ENCODE measurements at regions of chr3 and their contacts with region 1.

Region 1: GRCh38 chr3:28916713-28917499 is 364.0 kb upstream of the RBMS3 start:
- DNase-seq: peak in 4 of 9 donors; percentile 0 to 23 (median 7)
- ATAC-seq: no peak
- H3K4me3 ChIP-seq: no peak overlapping the region
- H3K4me3 Mint-ChIP-seq: peak overlapping the region in 2 of 10 donors; percentile 26 to 43
- H3K27ac ChIP-seq: no peak overlapping the region
- H3K27ac Mint-ChIP-seq: no peak overlapping the region
- H3K4me1 ChIP-seq: no peaks in the 10 kb centered on the region
- H3K4me1 Mint-ChIP-seq: peaks cover 0 to 18% (median 4%) of the 10 kb centered on the region in 7 donors
- H3K27me3 ChIP-seq: no peaks in the 10 kb centered on the region
- H3K27me3 Mint-ChIP-seq: peaks cover 0 to 14% (median 0%) of the 10 kb centered on the region in 5 donors

Region 2: GRCh38 chr3:29764603-29765254 is 847.8 kb after region 1 on chr3:
- CTCF ChIA-PET with region 1: no interaction called
- POLR2A ChIA-PET with region 1: no interaction called
- intact Hi-C with region 1: loop called in 1 of 2 experiments (anchors 2 kb)
- DNase-seq: no peak
- ATAC-seq: no peak
- H3K4me3 ChIP-seq: no peak overlapping the region
- H3K4me3 Mint-ChIP-seq: no peak overlapping the region
- H3K27ac ChIP-seq: no peak overlapping the region
- H3K27ac Mint-ChIP-seq: no peak overlapping the region
- H3K4me1 ChIP-seq: no peaks in the 10 kb centered on the region
- H3K4me1 Mint-ChIP-seq: no peaks in the 10 kb centered on the region
- H3K27me3 ChIP-seq: no peaks in the 10 kb centered on the region
- H3K27me3 Mint-ChIP-seq: peaks cover 3 to 27% (median 7%) of the 10 kb centered on the region in 5 donors

Measured in naive thymus-derived CD4-positive, alpha-beta T cell (primary cell).